GM10248 (cell line): ENCODE measurements at regions of chr11 and their contacts with region 1.

Region 1: GRCh38 chr11:44865866-44866272 is 84.8 kb downstream of the TP53I11 start:
- DNase-seq: no peak
- CTCF ChIP-seq: no peak

Region 2: DNA sequence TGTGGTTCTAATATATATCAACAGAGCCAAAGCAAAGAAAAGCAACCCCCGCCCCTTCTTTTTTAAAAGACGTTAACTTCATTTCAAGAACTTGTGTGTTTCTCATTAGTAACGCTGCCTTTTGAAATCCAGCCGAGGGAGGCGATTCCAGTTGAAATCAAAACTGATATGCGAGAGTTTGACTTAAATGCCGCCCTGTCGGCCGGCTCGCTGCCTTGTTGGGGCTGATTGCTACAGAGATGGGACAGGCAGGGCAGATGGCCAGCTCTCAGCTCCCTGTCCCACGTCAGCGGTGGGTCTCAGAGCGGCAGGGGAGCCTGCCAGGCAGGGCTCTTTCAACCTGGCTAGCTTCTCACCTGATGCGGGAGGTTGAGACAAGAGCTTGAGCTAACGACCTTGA is 504.1 kb before region 1 on chr11:
- CTCF ChIA-PET with region 1: no interaction called
- POLR2A ChIA-PET with region 1: no interaction called
- DNase-seq: no peak
- CTCF ChIP-seq: no peak

Region 3: DNA sequence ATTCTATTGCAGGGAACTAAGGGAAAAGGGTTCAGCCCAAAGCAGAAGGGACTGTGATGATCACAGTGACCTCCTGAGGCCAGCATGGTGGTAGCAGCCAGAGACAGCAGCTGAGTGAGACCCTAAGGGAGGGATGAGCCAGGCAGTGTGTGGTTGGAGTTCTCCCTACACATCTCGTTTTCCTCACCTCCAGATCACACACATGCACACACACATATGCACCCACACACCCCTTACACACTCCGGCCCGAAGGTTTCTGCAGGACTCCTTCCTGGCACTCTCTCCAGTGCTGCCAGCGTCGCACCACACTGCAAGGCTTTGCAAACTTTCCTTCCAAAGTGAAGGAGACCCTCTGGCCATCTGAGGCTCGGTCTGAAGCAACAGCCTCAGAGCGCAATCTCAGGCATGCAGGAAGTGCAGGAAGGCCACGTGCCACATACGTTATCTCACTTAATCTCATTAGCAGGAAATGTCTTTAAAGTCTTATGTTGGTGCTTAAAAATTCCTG is 111.7 kb after region 1 on chr11:
- CTCF ChIA-PET with region 1: no interaction called
- POLR2A ChIA-PET with region 1: no interaction called
- DNase-seq: no peak
- CTCF ChIP-seq: no peak

Region 4: DNA sequence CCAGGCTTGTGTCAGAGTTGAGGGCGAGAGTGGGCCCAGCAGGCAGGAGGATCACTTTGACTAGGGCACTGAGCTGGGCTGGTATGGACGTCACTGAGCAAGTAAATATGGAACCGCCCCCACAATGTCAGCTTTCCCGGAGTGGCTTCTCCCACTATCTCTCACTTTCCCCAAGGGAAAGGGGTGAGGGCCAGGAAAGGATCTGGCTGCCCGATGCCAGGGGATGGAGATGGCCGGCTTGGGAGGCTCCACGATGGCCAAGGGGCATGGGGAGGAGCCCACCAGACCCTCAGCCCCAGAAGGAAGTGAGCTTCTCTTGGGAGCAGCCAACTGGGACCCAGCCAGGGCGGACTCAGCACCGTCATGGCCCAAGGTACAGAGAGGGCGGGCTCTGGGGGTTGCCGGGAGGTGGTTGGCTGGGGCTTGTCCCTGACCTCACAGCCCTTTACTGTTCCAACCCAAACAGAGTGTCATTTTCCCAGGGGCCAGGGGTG is 289.2 kb after region 1 on chr11:
- CTCF ChIA-PET with region 1: no interaction called
- POLR2A ChIA-PET with region 1: interaction called, 12 read pairs
- DNase-seq: no peak
- CTCF ChIP-seq: no peak